Natural killer cell (primary cell): ENCODE measurements at regions of chr2 and their contacts with region 1.

Region 1: GRCh38 chr2:21042958-21043743 is 722 bp downstream of the APOB start:
- DNase-seq: peak; percentile 55 to 74
- ATAC-seq: peak; percentile 68 to 91 (median 72)
- H3K4me3 ChIP-seq: no peak overlapping the region
- H3K4me3 Mint-ChIP-seq: peak overlapping the region; percentile 25
- H3K27ac ChIP-seq: no peak overlapping the region
- H3K27ac Mint-ChIP-seq: no peak overlapping the region
- H3K4me1 ChIP-seq: peaks cover 5% of the 10 kb centered on the region
- H3K4me1 Mint-ChIP-seq: peaks cover 4 to 6% of the 10 kb centered on the region in 2 donors
- H3K27me3 ChIP-seq: peaks cover 2% of the 10 kb centered on the region
- H3K27me3 Mint-ChIP-seq: peaks cover 15 to 23% of the 10 kb centered on the region in 2 donors
- CTCF ChIP-seq: peak; percentile 93

Region 2: DNA sequence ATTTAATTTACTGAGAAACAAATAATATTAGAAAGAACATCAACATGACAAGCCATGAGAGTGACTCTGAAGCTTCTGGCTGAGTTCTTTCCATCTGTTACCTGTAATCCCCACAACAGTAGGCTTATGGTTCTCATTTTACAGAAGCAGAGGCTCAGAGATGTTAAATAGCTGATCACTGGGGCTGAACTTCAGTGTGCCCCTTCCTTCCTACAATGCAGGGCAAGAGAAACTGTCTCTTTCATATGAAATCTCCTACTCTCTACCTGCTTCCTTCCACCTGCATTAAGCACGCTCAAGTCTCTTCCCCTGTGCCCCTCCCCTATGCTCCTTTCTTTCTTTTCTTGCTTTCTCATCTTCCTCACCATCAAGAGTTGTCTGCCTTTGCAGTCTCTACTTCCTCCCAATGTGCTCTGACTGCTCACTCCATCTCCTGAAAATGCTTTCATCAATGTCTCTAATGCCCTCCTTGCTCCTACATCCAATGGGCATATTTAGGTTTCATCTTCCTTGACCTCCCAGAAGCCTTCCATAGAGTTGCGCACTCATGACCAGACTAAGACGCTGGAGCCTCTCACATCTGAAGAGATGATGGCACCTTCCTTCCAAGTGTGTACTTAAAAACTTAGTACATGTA is 23.0 kb before region 1 on chr2:
- intact Hi-C with region 1: no loop called
- DNase-seq: no peak
- ATAC-seq: no peak
- H3K4me3 ChIP-seq: no peak overlapping the region
- H3K4me3 Mint-ChIP-seq: no peak overlapping the region
- H3K27ac ChIP-seq: no peak overlapping the region
- H3K27ac Mint-ChIP-seq: no peak overlapping the region
- H3K4me1 ChIP-seq: no peaks in the 10 kb centered on the region
- H3K4me1 Mint-ChIP-seq: no peaks in the 10 kb centered on the region
- H3K27me3 ChIP-seq: no peaks in the 10 kb centered on the region
- H3K27me3 Mint-ChIP-seq: peaks cover 0 to 4% of the 10 kb centered on the region in 2 donors
- CTCF ChIP-seq: no peak

Region 3: GRCh38 chr2:21083482-21083881 is 40.3 kb after region 1 on chr2:
- intact Hi-C with region 1: no loop called
- DNase-seq: no peak
- ATAC-seq: no peak
- H3K4me3 ChIP-seq: no peak overlapping the region
- H3K4me3 Mint-ChIP-seq: no peak overlapping the region
- H3K27ac ChIP-seq: no peak overlapping the region
- H3K27ac Mint-ChIP-seq: no peak overlapping the region
- H3K4me1 ChIP-seq: no peaks in the 10 kb centered on the region
- H3K4me1 Mint-ChIP-seq: no peaks in the 10 kb centered on the region
- H3K27me3 ChIP-seq: no peaks in the 10 kb centered on the region
- H3K27me3 Mint-ChIP-seq: peaks cover 0 to 14% of the 10 kb centered on the region in 2 donors
- CTCF ChIP-seq: no peak

Region 4: GRCh38 chr2:21118302-21118920 is 75.3 kb after region 1 on chr2:
- intact Hi-C with region 1: loop called (anchors 2 kb)
- DNase-seq: peak in 1 of 2 donors; percentile 10
- ATAC-seq: peak in 1 of 3 donors; percentile 44
- H3K4me3 ChIP-seq: no peak overlapping the region
- H3K4me3 Mint-ChIP-seq: no peak overlapping the region
- H3K27ac ChIP-seq: no peak overlapping the region
- H3K27ac Mint-ChIP-seq: no peak overlapping the region
- H3K4me1 ChIP-seq: no peaks in the 10 kb centered on the region
- H3K4me1 Mint-ChIP-seq: no peaks in the 10 kb centered on the region
- H3K27me3 ChIP-seq: no peaks in the 10 kb centered on the region
- H3K27me3 Mint-ChIP-seq: peaks cover 0 to 18% of the 10 kb centered on the region in 2 donors
- CTCF ChIP-seq: peak; percentile 7

Region 5: GRCh38 chr2:21165350-21165749 is 122.2 kb after region 1 on chr2:
- intact Hi-C with region 1: loop called (anchors 10 kb)
- DNase-seq: no peak
- ATAC-seq: no peak
- H3K4me3 ChIP-seq: no peak overlapping the region
- H3K4me3 Mint-ChIP-seq: no peak overlapping the region
- H3K27ac ChIP-seq: no peak overlapping the region
- H3K27ac Mint-ChIP-seq: no peak overlapping the region
- H3K4me1 ChIP-seq: no peaks in the 10 kb centered on the region
- H3K4me1 Mint-ChIP-seq: no peaks in the 10 kb centered on the region
- H3K27me3 ChIP-seq: no peaks in the 10 kb centered on the region
- H3K27me3 Mint-ChIP-seq: peaks cover 0 to 8% of the 10 kb centered on the region in 2 donors
- CTCF ChIP-seq: no peak